ENCODE measurements at regions of chr9 and their contacts with region 1.

Region 1: GRCh38 chr9:89549031-89549644 is 51.2 kb upstream of the SEMA4D start:
- DNase-seq: peak; percentile 76
- ATAC-seq: peak; percentile 96 to 97

Region 2: GRCh38 chr9:89318123-89319014 is 230.8 kb before region 1 on chr9 and contains the start of gene SECISBP2:
- intact Hi-C with region 1: loop called (anchors 2 to 10 kb)
- DNase-seq: peak; percentile 97
- ATAC-seq: peak; percentile 99
- total RNA-seq, gene SECISBP2: 17.1 to 22.7 TPM

Region 3: GRCh38 chr9:89323390-89323789 is 225.7 kb before region 1 on chr9:
- intact Hi-C with region 1: loop called (anchors 2 to 10 kb)
- DNase-seq: no peak
- ATAC-seq: no peak

Region 4: GRCh38 chr9:89405826-89406225 is 143.3 kb before region 1 on chr9:
- intact Hi-C with region 1: loop called in 1 of 2 experiments (anchors 5 kb)
- DNase-seq: no peak
- ATAC-seq: peak; percentile 50 to 62

Region 5: GRCh38 chr9:89508951-89509615 is 40.1 kb before region 1 on chr9:
- intact Hi-C with region 1: no loop called
- DNase-seq: no peak
- ATAC-seq: no peak

Region 6: DNA sequence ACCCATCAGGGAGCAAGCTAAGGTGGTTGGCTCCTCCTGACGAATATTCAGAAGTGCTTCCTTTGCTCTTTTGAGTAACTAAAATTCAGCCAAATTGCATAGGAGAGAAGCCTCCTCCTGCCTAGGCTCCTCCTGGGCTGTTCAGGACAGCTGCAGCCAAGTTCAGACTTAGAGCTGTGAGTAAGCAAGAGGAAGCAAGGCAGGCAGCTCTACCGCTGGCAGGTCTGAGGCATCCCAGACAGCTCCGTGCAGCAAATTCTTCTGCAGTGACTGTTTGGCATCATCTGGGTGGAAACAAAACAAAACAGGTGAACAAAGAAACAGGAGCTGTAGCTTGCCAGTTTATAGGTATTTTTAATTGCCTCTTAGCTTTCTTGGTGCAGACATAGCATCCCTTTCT is 476.7 kb after region 1 on chr9:
- intact Hi-C with region 1: no loop called
- DNase-seq: no peak
- ATAC-seq: peak in 1 of 2 donors; percentile 93

Measured in left cardiac atrium (tissue), 4 donors.